ENCODE measurements at regions of chr7 and their contacts with region 1.

Region 1: GRCh38 chr7:149147072-149147751 is at the start of gene ZNF398:
- DNase-seq: peak; percentile 73
- H3K4me3 Mint-ChIP-seq: peak within 1 kb of the TSS; percentile 87
- H3K27ac Mint-ChIP-seq: peak within 1 kb of the TSS; percentile 91
- H3K4me1 Mint-ChIP-seq: peaks cover 33% of the 10 kb centered on the region
- H3K27me3 Mint-ChIP-seq: no peaks in the 10 kb centered on the region
- total RNA-seq, gene ZNF398: 4.3 to 5.0 TPM

Region 2: DNA sequence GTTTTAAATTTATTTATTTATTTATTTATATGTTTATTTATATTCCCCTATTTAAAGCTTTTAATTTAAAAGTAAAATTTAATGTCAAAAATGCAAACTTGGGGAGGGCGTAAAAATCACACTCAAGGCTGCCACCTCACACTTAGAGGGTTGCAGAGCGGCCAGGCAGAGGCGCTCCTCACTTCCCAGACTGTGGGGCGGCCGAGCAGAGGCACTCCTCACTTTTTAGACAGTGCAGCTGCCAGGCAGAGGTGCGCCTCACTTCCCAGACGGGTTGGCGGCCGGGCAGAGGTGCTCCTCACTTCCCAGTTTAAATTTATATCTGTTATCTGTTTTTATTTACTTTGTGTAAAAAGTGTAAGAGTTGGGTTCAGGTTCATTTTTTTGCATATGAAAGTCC is 11.1 kb before region 1 on chr7:
- CTCF ChIA-PET with region 1: interaction called, 11 read pairs
- intact Hi-C with region 1: no loop called
- DNase-seq: no peak
- H3K4me3 Mint-ChIP-seq: no peak overlapping the region
- H3K27ac Mint-ChIP-seq: no peak overlapping the region
- H3K4me1 Mint-ChIP-seq: no peaks in the 10 kb centered on the region
- H3K27me3 Mint-ChIP-seq: no peaks in the 10 kb centered on the region